ENCODE measurements at regions of chr15 and their contacts with region 1.

Region 1: GRCh38 chr15:50066192-50066591 is 52.8 kb downstream of the ATP8B4 start:
- DNase-seq: peak; percentile 55
- ATAC-seq: peak; percentile 94
- H3K4me3 Mint-ChIP-seq: no peak overlapping the region
- H3K27ac Mint-ChIP-seq: peak overlapping the region; percentile 44
- H3K4me1 Mint-ChIP-seq: peaks cover 23% of the 10 kb centered on the region
- H3K27me3 Mint-ChIP-seq: peaks cover 18% of the 10 kb centered on the region

Region 2: GRCh38 chr15:49876401-49877038 is 189.7 kb before region 1 on chr15:
- CTCF ChIA-PET with region 1: no interaction called
- POLR2A ChIA-PET with region 1: no interaction called
- intact Hi-C with region 1: no loop called
- DNase-seq: no peak
- ATAC-seq: no peak
- H3K4me3 Mint-ChIP-seq: no peak overlapping the region
- H3K27ac Mint-ChIP-seq: no peak overlapping the region
- H3K4me1 Mint-ChIP-seq: no peaks in the 10 kb centered on the region
- H3K27me3 Mint-ChIP-seq: peaks cover 2% of the 10 kb centered on the region

Region 3: GRCh38 chr15:50107591-50108408 is 41.6 kb after region 1 on chr15:
- CTCF ChIA-PET with region 1: no interaction called
- POLR2A ChIA-PET with region 1: no interaction called
- intact Hi-C with region 1: loop called in 1 of 2 experiments (anchors 2 kb)
- DNase-seq: peak; percentile 53
- ATAC-seq: peak; percentile 85
- H3K4me3 Mint-ChIP-seq: no peak overlapping the region
- H3K27ac Mint-ChIP-seq: peak overlapping the region; percentile 77
- H3K4me1 Mint-ChIP-seq: peaks cover 38% of the 10 kb centered on the region
- H3K27me3 Mint-ChIP-seq: peaks cover 2% of the 10 kb centered on the region